CD8-positive, alpha-beta memory T cell (primary cell): ENCODE measurements at regions of chr9 and their contacts with region 1.

Region 1: DNA sequence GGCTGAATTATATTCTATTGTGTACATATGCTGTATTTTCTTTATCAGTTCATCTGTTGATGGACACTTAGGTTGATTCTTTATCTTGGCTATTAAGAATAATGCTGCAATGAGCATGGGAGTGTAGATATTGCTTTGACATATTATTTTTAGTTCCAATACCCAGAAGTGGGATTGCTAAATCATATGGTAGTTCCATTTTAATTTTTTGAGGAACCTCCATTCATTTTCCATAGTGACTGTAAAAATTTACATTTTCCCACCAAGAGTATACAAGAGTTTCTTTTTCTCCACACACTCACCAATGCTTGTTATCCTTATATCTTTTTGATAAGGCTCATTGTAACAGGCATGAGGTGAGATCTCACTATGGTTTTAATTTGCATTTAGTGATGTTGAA is 19.4 kb downstream of the JAK2 start:
- DNase-seq: no peak
- H3K4me3 ChIP-seq: no peak overlapping the region
- H3K4me3 Mint-ChIP-seq: no peak overlapping the region
- H3K27ac ChIP-seq: no peak overlapping the region
- H3K27ac Mint-ChIP-seq: no peak overlapping the region
- H3K4me1 ChIP-seq: no peaks in the 10 kb centered on the region
- H3K4me1 Mint-ChIP-seq: peaks cover 24 to 35% (median 25%) of the 10 kb centered on the region in 3 donors
- H3K27me3 ChIP-seq: no peaks in the 10 kb centered on the region
- H3K27me3 Mint-ChIP-seq: no peaks in the 10 kb centered on the region

Region 2: DNA sequence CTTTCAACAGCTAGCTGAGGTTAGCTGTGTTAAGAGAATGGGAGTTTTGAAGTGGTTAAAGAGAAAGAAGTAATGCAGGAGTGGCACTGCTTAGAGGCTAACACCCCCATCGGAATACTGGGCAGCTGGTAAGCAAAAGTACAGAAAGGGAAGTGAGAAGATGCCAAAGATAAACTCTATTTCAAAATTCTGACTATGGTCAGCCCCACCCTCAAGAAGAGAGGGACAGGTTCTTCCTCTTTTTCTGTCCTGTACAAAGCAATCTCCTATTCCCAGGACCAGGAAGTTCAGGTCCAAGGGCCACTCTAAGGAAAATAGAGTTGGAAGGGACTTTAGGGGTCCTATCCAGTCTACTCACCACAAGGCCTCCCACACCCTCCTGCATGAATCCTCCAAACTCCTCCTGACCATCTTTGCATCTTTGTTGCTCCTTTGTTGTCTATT is 65.3 kb before region 1 on chr9:
- CTCF ChIA-PET with region 1: no interaction called
- POLR2A ChIA-PET with region 1: interaction called, 11 read pairs
- DNase-seq: peak in 1 of 5 donors; percentile 16
- H3K4me3 ChIP-seq: no peak overlapping the region
- H3K4me3 Mint-ChIP-seq: peak overlapping the region in 4 of 7 donors; percentile 6 to 57 (median 32)
- H3K27ac ChIP-seq: no peak overlapping the region
- H3K27ac Mint-ChIP-seq: peak overlapping the region in 5 of 8 donors; percentile 7 to 58 (median 25)
- H3K4me1 ChIP-seq: peaks cover 31% of the 10 kb centered on the region
- H3K4me1 Mint-ChIP-seq: peaks cover 42 to 55% (median 48%) of the 10 kb centered on the region in 3 donors
- H3K27me3 ChIP-seq: no peaks in the 10 kb centered on the region
- H3K27me3 Mint-ChIP-seq: no peaks in the 10 kb centered on the region

Region 3: DNA sequence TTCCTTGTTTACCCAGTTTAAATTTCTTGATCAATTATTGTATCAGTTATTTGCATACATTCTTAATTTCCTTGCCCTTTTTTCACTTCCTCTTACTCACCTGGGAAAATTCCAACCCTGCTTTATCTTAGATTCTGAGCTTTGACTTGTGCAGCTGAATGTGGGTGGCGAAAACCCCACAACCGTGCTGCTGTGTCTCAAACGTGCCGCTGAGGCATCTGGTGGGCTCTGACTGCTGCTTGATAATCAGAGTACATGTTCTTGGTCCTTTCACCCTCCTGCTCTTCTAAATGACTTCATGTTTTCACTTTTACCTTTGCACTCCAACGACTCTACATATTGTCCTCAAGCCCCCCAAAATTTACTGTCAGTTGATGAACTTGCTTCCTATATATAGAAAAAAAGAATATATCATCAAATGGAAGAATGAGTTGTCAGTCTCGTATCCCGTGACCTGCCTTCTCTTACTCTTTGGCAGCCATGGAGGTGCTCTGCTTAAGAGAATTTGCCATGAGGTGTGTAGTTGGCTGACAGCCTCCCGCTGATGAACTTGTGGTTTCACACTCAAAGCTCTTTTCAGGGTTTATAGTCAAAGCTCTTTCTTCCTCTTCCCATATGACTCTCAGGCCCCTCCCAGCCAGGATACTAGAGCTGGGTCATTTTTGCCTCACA is 33.4 kb before region 1 on chr9:
- CTCF ChIA-PET with region 1: no interaction called
- POLR2A ChIA-PET with region 1: no interaction called
- DNase-seq: peak in 3 of 5 donors; percentile 12 to 55 (median 43)
- H3K4me3 ChIP-seq: peak overlapping the region; percentile 20
- H3K4me3 Mint-ChIP-seq: no peak overlapping the region
- H3K27ac ChIP-seq: no peak overlapping the region
- H3K27ac Mint-ChIP-seq: no peak overlapping the region
- H3K4me1 ChIP-seq: peaks cover 18% of the 10 kb centered on the region
- H3K4me1 Mint-ChIP-seq: peaks cover 0 to 4% (median 0%) of the 10 kb centered on the region in 3 donors
- H3K27me3 ChIP-seq: no peaks in the 10 kb centered on the region
- H3K27me3 Mint-ChIP-seq: peaks cover 0 to 8% of the 10 kb centered on the region in 2 donors